ENCODE measurements at regions of chr1 and their contacts with region 1.

Region 1: GRCh38 chr1:56821140-56821797 is 2.1 kb upstream of the FYB2 start:
- DNase-seq: peak; percentile 81
- H3K4me3 ChIP-seq: no peak overlapping the region; a peak in 1 of 4 replicates
- H3K27ac ChIP-seq: no peak overlapping the region
- H3K4me1 ChIP-seq: peaks cover 0 to 25% of the 10 kb centered on the region in 2 experiments; a peak in 2 of 4 replicates
- H3K27me3 ChIP-seq: no peaks in the 10 kb centered on the region
- CTCF ChIP-seq: peak; percentile 98
- EP300 ChIP-seq: no peak
- RAD21 ChIP-seq: peak; percentile 90

Region 2: DNA sequence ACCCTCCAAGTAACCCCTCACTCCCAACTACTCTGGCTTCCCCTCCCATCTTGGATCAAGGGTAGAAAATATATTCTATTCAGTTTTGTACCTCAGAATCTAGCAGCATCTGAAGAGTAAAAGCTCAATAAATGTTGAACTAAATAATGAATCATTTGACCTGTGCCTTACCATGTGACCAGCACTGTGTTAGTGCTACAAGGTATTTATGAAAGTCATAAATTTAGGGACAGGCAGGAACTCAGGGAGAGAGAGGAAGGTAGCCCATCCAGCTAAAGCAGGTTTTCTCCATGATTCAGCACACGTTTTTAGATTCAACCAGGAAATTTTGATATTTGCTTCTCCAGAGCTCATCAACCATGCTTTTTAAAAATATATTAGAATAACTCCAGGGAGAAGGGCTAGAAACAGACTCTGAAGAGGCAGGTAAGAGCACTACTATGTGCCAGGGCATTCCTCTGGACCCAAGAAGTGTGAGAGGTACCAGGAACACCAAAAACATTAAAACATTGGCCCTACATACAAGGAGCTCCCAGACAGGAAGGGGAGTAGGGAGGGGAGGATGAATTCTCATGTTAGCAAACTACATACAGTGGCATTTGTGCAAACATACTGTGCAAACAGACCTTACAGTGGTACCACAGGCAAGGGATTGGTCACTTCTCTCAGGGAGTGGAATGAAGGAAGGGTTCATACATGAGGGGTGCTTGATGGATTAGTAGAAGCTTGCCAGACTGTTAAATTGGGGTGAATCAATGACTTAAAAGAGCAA is 66.4 kb before region 1 on chr1:
- CTCF ChIA-PET with region 1: interaction called, 11 read pairs
- POLR2A ChIA-PET with region 1: no interaction called
- DNase-seq: no peak
- H3K4me3 ChIP-seq: no peak overlapping the region
- H3K27ac ChIP-seq: no peak overlapping the region
- H3K4me1 ChIP-seq: no peaks in the 10 kb centered on the region; a peak in 1 of 4 replicates
- H3K27me3 ChIP-seq: no peaks in the 10 kb centered on the region
- CTCF ChIP-seq: no peak
- EP300 ChIP-seq: no peak
- RAD21 ChIP-seq: no peak

Region 3: DNA sequence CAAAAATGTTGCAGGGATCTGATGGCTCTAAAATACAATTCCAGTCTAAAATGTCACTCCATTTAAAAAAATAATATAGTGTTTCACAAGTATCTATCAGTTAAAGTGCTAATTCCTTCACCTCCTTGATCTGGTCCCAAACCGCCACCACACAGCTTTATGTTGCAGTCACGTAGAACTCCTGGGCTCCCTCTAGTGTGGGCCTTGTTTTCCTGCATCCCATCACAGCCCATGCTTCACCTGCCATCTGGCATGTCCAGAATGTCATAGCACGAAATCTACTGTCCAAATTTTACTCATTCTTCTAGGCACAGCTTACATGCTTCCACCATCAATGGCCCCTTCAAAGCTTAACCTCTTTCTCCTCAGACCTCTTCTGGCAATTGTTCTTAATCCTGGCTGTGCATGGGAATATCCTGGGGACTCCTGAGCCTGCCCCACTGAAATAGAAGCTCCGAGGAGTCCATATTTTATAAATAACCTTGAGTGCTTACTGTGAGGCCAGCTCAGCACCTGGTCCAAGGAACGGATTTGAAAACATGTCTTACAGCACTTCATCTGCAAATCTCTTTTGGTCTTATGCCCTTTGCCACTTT is 17.6 kb before region 1 on chr1:
- CTCF ChIA-PET with region 1: interaction called, 39 read pairs
- POLR2A ChIA-PET with region 1: no interaction called
- DNase-seq: peak; percentile 34
- H3K4me3 ChIP-seq: no peak overlapping the region
- H3K27ac ChIP-seq: no peak overlapping the region
- H3K4me1 ChIP-seq: no peaks in the 10 kb centered on the region; a peak in 1 of 4 replicates
- H3K27me3 ChIP-seq: no peaks in the 10 kb centered on the region
- CTCF ChIP-seq: peak; percentile 58
- EP300 ChIP-seq: no peak
- RAD21 ChIP-seq: peak; percentile 57

Region 4: DNA sequence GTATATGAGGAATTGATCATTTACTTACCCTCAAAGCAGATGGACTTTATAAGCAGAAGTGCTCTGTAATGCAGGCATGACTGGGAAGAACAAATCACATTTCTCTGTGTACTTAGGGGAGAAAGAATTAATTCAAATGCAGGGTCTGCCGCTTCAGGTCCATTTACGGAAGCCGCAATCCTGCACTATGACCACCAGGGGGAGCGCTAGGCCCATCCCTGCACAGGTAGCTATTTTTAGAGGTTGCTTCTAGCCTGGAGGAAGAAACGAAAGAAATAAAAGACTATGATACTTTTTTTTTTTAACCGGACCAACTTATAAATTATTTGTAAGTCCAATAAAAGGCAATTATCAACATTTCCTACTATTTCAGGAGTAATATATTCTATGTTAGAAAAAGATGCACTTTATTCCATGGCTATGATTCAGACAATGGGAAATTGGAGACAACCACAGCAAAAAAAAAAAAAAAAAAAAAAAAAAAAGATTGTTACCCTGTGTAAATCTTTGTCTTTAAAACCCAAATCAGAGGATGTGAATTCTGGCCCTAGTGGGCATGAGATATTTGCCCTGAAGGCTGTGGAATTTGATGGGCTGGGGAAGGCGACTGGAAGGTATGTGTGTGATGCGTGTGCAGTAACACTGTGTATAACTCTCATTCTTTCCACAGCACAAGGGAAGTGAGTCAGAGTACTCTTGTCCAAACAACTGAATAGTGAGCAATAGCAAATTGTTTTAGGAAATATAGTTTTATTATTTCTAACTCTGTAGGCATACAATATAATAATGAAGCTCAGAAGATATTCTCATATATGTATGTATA is 10.8 kb after region 1 on chr1:
- CTCF ChIA-PET with region 1: interaction called, 25 read pairs
- POLR2A ChIA-PET with region 1: no interaction called
- DNase-seq: peak; percentile 68
- H3K4me3 ChIP-seq: peak overlapping the region; percentile 18 to 44; a peak in 2 of 4 replicates
- H3K27ac ChIP-seq: peak overlapping the region in 1 of 2 experiments; percentile 86; a peak in 2 of 4 replicates
- H3K4me1 ChIP-seq: peaks cover 0 to 3% of the 10 kb centered on the region in 2 experiments; a peak in 1 of 4 replicates
- H3K27me3 ChIP-seq: no peaks in the 10 kb centered on the region
- CTCF ChIP-seq: peak; percentile 99
- EP300 ChIP-seq: peak in 1 of 2 experiments; percentile 42; a peak in 1 of 4 replicates
- RAD21 ChIP-seq: peak; percentile 99

Region 5: DNA sequence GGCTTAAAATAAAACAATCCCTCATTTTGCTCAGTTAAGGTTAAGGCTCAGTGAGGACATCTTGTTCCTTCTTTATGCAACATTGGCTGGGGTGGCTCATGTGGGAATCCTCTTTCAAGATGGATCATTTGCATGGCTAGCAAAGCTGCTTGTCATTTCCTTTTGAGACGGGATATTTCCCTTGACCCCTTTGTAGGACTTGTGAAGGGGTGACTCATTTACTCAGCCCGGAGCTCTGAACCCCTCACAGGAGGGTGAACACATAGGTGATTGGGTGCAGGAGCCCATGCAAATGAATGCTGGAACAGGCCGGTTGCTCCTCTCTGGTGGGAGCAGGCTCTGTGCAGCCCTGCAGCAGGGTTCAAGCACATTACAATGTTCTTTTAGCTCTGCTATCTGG is 17.5 kb after region 1 on chr1:
- CTCF ChIA-PET with region 1: interaction called, 13 read pairs
- POLR2A ChIA-PET with region 1: no interaction called
- DNase-seq: no peak
- H3K4me3 ChIP-seq: no peak overlapping the region
- H3K27ac ChIP-seq: no peak overlapping the region
- H3K4me1 ChIP-seq: no peaks in the 10 kb centered on the region
- H3K27me3 ChIP-seq: no peaks in the 10 kb centered on the region
- CTCF ChIP-seq: no peak
- EP300 ChIP-seq: no peak
- RAD21 ChIP-seq: no peak